BJ (cell line): ENCODE measurements at regions of chr2 and their contacts with region 1.

Region 1: GRCh38 chr2:231925303-231926179 is 655 bp downstream of the NPPC start:
- DNase-seq: no peak
- H3K4me3 ChIP-seq: peak overlapping the region; percentile 32
- H3K27me3 ChIP-seq: peaks cover 39% of the 10 kb centered on the region
- CTCF ChIP-seq: peak; percentile 72

Region 2: GRCh38 chr2:232085179-232085578 is 159.6 kb after region 1 on chr2:
- CTCF ChIA-PET with region 1: no interaction called
- POLR2A ChIA-PET with region 1: no interaction called
- DNase-seq: no peak
- H3K4me3 ChIP-seq: no peak overlapping the region
- H3K27me3 ChIP-seq: no peaks in the 10 kb centered on the region
- CTCF ChIP-seq: no peak

Region 3: DNA sequence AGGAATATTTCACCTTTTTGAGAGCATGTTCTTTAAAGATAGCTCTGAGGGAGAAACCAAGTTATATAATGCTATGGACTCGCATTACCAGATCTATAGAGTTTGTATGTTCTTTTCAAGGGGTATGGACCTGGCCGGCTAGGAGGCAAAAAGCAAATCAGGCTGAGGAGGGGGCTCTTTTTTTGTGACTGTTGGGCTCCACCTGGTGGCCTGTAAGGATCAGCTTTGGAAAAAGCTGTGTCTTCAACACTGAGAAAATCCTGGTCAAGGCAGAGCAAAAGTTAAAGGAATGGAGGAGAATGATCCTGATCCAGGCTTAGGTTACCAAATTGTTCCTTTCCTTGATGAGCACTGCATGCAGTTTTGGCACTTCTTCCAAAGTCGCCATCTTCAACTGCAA is 216.5 kb after region 1 on chr2:
- CTCF ChIA-PET with region 1: interaction called, 69 read pairs
- POLR2A ChIA-PET with region 1: no interaction called
- DNase-seq: no peak
- H3K4me3 ChIP-seq: no peak overlapping the region
- H3K27me3 ChIP-seq: no peaks in the 10 kb centered on the region
- CTCF ChIP-seq: peak; percentile 70

Region 4: GRCh38 chr2:232286001-232286868 is 360.7 kb after region 1 on chr2:
- CTCF ChIA-PET with region 1: interaction called, 13 read pairs
- POLR2A ChIA-PET with region 1: no interaction called
- DNase-seq: no peak
- H3K4me3 ChIP-seq: no peak overlapping the region
- H3K27me3 ChIP-seq: no peaks in the 10 kb centered on the region
- CTCF ChIP-seq: no peak

Region 5: GRCh38 chr2:232315049-232315922 is 389.7 kb after region 1 on chr2:
- CTCF ChIA-PET with region 1: interaction called, 186 read pairs
- POLR2A ChIA-PET with region 1: no interaction called
- DNase-seq: peak; percentile 52
- H3K4me3 ChIP-seq: no peak overlapping the region
- H3K27me3 ChIP-seq: no peaks in the 10 kb centered on the region
- CTCF ChIP-seq: 0 out of 2 replicates have a peak, but pooled peaks have one; percentile 11

Region 6: DNA sequence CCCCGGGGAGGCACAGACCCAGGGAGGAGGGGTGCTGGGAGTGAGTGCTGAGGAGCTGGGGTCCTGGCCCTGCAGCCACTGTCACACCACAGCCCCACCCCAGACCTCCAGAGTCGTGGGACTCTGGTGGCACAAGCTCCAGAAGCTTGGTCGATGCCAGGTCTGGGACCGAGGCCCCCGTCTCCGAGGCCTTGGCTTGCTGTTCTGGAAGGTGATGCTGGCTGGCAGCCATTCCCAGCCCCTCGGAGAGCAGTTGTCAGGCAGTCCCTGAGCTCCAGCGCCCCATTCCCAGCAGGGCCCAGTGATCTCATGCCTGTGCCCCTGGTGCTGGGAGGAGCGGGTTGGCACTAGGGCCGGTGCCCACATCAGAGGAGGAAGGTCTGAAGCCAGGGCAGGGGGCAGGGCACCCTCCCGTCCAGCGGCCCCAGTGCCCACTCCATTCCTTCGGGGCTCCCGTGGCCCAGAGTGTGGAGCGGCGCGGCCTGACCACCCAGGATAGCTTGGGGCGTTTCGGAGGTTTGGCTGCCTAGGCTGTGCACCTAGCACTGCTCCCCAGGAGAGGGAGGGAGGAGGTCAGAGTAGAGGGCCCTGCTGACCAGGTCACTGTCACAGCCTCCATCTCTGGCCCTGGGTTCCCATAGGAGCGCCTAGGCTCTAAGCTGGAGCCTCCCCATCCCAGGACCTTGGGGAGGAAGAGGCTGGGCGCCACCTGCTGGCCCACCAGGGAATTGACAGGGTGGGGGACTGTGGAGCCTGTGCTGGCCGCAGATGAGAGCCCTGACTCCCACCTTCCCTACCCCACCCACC is 513.6 kb after region 1 on chr2:
- CTCF ChIA-PET with region 1: interaction called, 10 read pairs
- POLR2A ChIA-PET with region 1: no interaction called
- DNase-seq: no peak
- H3K4me3 ChIP-seq: no peak overlapping the region
- H3K27me3 ChIP-seq: peaks cover 1% of the 10 kb centered on the region; the same call in 1 of the 2 replicates
- CTCF ChIP-seq: peak; percentile 49; the same call in 1 of the 2 replicates